GM12878 (cell line): ENCODE measurements at regions of chr4 and their contacts with region 1.

Region 1: GRCh38 chr4:102620697-102621497 is 119.7 kb downstream of the NFKB1 start:
- DNase-seq: no peak
- ATAC-seq: peak; percentile 70
- H3K4me3 ChIP-seq: no peak overlapping the region
- H3K27ac ChIP-seq: no peak overlapping the region
- H3K4me1 ChIP-seq: peaks cover 3% of the 10 kb centered on the region; the same call in 1 of the 2 replicates
- H3K27me3 ChIP-seq: no peaks in the 10 kb centered on the region
- CTCF ChIP-seq: peak; percentile 30 to 51 (median 45); a peak in 5 of 6 replicates
- EP300 ChIP-seq: no peak
- POLR2A ChIP-seq: no peak
- RAD21 ChIP-seq: peak; percentile 78

Region 2: DNA sequence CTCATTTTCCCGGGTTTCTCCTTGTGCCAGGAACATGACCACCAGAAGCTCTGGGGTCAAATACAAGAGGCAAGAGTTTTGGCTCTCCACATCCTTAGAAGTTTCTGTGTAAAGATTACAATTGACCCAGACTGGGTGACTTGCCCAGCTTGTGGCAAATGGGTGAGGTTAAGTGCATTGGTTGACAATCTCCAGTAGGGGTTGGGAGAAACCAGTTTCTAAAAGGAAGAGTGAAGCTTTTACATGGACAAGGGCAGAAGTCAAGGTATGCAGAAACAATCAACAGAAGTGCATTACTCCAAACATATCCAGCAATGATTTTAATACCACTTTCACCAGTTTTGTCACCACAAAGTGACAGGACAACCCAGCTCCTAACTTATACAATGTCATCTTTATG is 365.4 kb before region 1 on chr4:
- CTCF ChIA-PET with region 1: interaction called, 3 read pairs
- POLR2A ChIA-PET with region 1: no interaction called
- RAD21 ChIA-PET with region 1: no interaction called
- SMC1A ChIA-PET with region 1: no interaction called
- in situ Hi-C with region 1: no loop called
- intact Hi-C with region 1: loop called (anchors 5 kb)
- DNase-seq: no peak
- ATAC-seq: no peak
- H3K4me3 ChIP-seq: no peak overlapping the region
- H3K27ac ChIP-seq: no peak overlapping the region
- H3K4me1 ChIP-seq: no peaks in the 10 kb centered on the region
- H3K27me3 ChIP-seq: no peaks in the 10 kb centered on the region
- CTCF ChIP-seq: no peak
- EP300 ChIP-seq: no peak
- POLR2A ChIP-seq: no peak
- RAD21 ChIP-seq: no peak

Region 3: DNA sequence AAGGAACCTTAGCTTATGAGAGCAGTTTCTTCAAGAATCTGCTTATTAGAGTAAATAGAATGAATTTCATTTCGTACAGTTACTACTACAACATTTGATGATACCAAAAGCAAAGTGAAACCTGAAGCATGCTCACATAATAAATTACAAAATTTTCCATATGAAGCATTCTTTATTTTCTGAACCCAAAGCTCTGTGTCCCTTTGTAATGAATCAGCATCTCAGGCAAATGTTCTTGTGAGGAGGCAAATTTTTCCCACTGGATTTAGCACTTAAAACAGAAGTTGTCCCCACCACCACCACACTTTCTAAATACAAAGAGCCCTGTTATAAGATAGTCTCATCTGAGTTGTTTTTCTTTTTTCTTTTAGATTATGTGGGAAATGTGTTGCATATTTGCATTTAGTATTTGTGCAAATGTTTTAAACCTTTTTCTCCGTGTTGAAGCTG is 190.4 kb before region 1 on chr4:
- CTCF ChIA-PET with region 1: interaction called, 10 read pairs
- POLR2A ChIA-PET with region 1: no interaction called
- RAD21 ChIA-PET with region 1: interaction called, 18 read pairs
- SMC1A ChIA-PET with region 1: interaction called, 8 read pairs
- in situ Hi-C with region 1: no loop called
- intact Hi-C with region 1: loop called (anchors 1 kb)
- DNase-seq: no peak
- ATAC-seq: peak; percentile 38
- H3K4me3 ChIP-seq: peak overlapping the region; percentile 83
- H3K27ac ChIP-seq: peak overlapping the region; percentile 61
- H3K4me1 ChIP-seq: no peaks in the 10 kb centered on the region
- H3K27me3 ChIP-seq: no peaks in the 10 kb centered on the region
- CTCF ChIP-seq: no peak
- EP300 ChIP-seq: no peak
- POLR2A ChIP-seq: no peak
- RAD21 ChIP-seq: no peak

Region 4: GRCh38 chr4:102610007-102610406 is 10.9 kb before region 1 on chr4:
- CTCF ChIA-PET with region 1: interaction called, 6 read pairs
- POLR2A ChIA-PET with region 1: no interaction called
- RAD21 ChIA-PET with region 1: no interaction called
- SMC1A ChIA-PET with region 1: interaction called, 20 read pairs
- in situ Hi-C with region 1: no loop called
- intact Hi-C with region 1: no loop called
- DNase-seq: no peak
- ATAC-seq: peak; percentile 54; the same call in 2 of the 3 replicates
- H3K4me3 ChIP-seq: no peak overlapping the region
- H3K27ac ChIP-seq: no peak overlapping the region
- H3K4me1 ChIP-seq: no peaks in the 10 kb centered on the region
- H3K27me3 ChIP-seq: no peaks in the 10 kb centered on the region
- CTCF ChIP-seq: peak; percentile 29 to 41 (median 40); a peak in 4 of 6 replicates
- EP300 ChIP-seq: no peak
- POLR2A ChIP-seq: no peak
- RAD21 ChIP-seq: peak; percentile 59

Region 5: GRCh38 chr4:103008875-103009729 is 388.2 kb after region 1 on chr4:
- CTCF ChIA-PET with region 1: interaction called, 16 read pairs
- POLR2A ChIA-PET with region 1: no interaction called
- RAD21 ChIA-PET with region 1: interaction called, 23 read pairs
- SMC1A ChIA-PET with region 1: interaction called, 35 read pairs
- in situ Hi-C with region 1: loop called (anchors 5 kb)
- intact Hi-C with region 1: loop called (anchors 1 kb)
- DNase-seq: peak; percentile 46
- ATAC-seq: peak; percentile 96
- H3K4me3 ChIP-seq: no peak overlapping the region
- H3K27ac ChIP-seq: no peak overlapping the region
- H3K4me1 ChIP-seq: no peaks in the 10 kb centered on the region
- H3K27me3 ChIP-seq: no peaks in the 10 kb centered on the region
- CTCF ChIP-seq: peak; percentile 59 to 82 (median 64)
- EP300 ChIP-seq: no peak
- POLR2A ChIP-seq: no peak
- RAD21 ChIP-seq: peak; percentile 97

Region 6: GRCh38 chr4:103786014-103786413 is 1165.1 kb after region 1 on chr4:
- CTCF ChIA-PET with region 1: no interaction called
- POLR2A ChIA-PET with region 1: no interaction called
- RAD21 ChIA-PET with region 1: no interaction called
- SMC1A ChIA-PET with region 1: no interaction called
- in situ Hi-C with region 1: loop called (anchors 25 kb)
- intact Hi-C with region 1: no loop called
- DNase-seq: peak; percentile 17
- ATAC-seq: peak; percentile 96
- H3K4me3 ChIP-seq: no peak overlapping the region
- H3K27ac ChIP-seq: no peak overlapping the region
- H3K4me1 ChIP-seq: no peaks in the 10 kb centered on the region
- H3K27me3 ChIP-seq: no peaks in the 10 kb centered on the region; a peak in 1 of 4 replicates
- CTCF ChIP-seq: peak; percentile 54 to 68 (median 62); a peak in 5 of 6 replicates
- EP300 ChIP-seq: no peak
- POLR2A ChIP-seq: no peak
- RAD21 ChIP-seq: peak; percentile 87